Head of caudate nucleus (tissue), 42 donors: ENCODE measurements at regions of chr19 and their contacts with region 1.

Region 1: DNA sequence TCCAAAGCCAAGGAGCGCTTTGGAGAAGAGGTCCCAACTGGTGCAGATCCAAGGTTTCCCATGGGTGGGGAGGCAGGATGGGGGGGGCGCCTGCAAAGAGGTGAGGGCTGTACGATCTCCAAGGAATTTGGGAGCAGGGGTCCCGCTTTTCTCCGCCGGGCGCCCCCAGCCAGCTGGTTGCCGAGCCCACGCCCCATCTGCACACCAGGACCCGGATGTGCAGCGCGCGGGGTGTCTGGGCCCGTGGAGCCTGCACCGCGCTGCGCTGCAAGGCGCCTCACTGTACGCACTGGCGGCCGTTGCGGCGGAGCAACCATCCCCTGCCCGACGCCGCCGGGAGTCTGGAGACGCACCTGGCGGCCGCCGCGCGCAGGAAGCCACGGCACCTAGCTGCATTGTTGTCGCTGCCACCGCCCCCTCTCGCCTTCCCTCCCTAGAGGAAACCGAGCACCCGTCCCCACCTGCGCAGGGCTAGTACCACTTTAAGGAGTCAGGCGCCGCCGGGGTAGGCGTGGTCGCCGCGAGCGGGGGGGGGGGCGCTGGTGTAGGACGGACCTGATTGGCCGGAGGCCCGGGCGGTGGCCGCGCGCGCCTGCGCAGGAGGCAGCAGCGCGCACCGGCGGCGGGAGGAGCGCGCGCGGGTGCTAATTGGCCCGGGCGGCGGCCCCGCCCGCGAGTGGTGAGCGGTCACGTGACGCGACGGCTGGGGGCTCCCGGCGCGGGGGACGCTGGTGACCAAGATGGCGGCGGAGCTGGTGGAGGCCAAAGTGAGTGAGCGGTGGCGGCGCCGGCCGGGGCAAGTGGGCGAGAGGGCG is at the start of gene PIAS4:
- DNase-seq: peak; percentile 88 to 98 (median 95)

Region 2: DNA sequence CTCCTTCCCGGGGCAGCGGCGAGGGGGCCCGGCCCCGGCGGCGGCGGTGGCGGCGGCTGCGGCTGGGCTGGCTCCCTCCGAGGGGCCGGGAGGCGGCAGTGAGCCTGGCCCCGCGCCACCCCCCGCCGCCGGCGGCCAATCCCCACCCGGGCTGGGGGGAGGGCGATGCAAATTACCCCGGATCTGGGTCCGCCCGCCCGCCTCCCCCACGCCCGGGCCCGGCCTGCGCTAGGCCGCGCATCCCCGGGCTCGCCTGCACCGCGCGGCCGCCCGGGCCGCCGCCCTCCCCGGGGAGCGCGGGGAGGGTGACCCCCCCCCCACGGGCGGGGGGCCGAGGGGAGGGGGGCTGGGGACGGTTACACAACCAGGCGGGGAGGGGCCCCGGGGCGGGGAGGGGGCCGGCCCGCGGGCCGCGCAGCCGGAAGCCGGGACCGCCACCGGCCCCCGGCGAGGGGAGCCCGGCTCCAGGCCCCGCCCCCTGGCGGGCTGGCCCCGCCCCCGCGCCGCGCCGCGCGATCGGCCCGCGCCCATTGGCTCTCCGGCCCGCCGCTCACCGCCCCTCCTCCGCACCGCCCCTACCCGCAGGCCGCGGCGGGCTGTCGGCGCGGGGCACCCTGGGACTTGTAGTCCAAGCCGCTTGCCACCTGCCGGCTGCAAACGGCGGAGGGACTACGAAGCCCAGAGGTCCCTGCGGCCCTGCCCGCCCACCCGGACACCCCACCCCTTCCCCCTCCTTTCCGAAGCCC is 58.4 kb after region 1 on chr19:
- intact Hi-C with region 1: loop called (anchors 2 kb)
- DNase-seq: peak; percentile 84 to 99 (median 97)